IMR-90 (cell line): ENCODE measurements at regions of chr3 and their contacts with region 1.

Region 1: DNA sequence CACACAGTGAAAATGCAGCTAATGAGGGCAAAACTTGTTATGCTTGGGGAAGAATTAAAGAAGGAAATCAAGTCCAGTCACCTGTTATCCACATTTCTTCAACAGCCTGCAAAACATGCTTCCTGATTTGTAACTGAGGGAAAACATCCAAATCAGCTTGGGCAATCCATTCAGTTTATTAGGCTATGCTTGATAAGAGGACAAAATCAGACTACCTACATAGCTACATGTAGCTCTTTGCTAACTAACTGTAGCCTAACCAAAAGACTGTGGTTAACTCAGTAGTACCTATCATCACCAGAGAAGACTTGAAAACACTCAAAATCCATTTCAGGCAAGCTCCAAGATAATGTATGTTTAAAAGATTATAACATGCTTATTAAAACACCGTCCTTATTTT is 436.4 kb downstream of the SHQ1 start:
- DNase-seq: no peak
- ATAC-seq: no peak
- H3K4me3 ChIP-seq: no peak overlapping the region
- H3K27ac ChIP-seq: no peak overlapping the region
- H3K4me1 ChIP-seq: peaks cover 9% of the 10 kb centered on the region
- H3K27me3 ChIP-seq: no peaks in the 10 kb centered on the region
- CTCF ChIP-seq: no peak
- POLR2A ChIP-seq: no peak
- RAD21 ChIP-seq: no peak

Region 2: DNA sequence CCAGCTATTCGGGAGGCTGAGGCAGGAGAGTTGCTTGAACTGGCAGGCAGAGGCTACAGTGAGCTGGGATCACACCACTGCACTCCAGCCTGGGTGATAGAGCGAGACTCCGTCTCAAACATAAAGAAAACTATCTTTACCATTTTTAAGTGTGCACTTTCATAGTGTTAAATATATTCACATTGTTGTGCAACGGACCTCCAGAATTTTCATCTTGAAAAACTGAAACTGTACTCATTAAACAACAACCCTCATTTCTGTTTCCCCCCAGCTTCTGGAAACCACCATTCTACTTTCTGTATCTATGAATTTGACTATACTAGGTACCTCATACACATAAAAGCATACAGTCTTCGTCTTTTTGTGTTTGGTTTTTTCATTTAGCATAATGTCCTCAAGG is 61.3 kb after region 1 on chr3:
- CTCF ChIA-PET with region 1: no interaction called
- POLR2A ChIA-PET with region 1: no interaction called
- dilution Hi-C with region 1: no loop called
- in situ Hi-C with region 1: no loop called
- intact Hi-C with region 1: no loop called
- DNase-seq: no peak
- ATAC-seq: no peak
- H3K4me3 ChIP-seq: no peak overlapping the region
- H3K27ac ChIP-seq: no peak overlapping the region
- H3K4me1 ChIP-seq: no peaks in the 10 kb centered on the region
- H3K27me3 ChIP-seq: peaks cover 15% of the 10 kb centered on the region
- CTCF ChIP-seq: no peak
- POLR2A ChIP-seq: no peak
- RAD21 ChIP-seq: no peak

Region 3: GRCh38 chr3:72746450-72747401 is 334.9 kb after region 1 on chr3:
- CTCF ChIA-PET with region 1: no interaction called
- POLR2A ChIA-PET with region 1: no interaction called
- dilution Hi-C with region 1: no loop called
- in situ Hi-C with region 1: no loop called
- intact Hi-C with region 1: loop called (anchors 1 kb)
- DNase-seq: peak; percentile 60
- ATAC-seq: peak; percentile 53
- H3K4me3 ChIP-seq: no peak overlapping the region
- H3K27ac ChIP-seq: no peak overlapping the region
- H3K4me1 ChIP-seq: no peaks in the 10 kb centered on the region
- H3K27me3 ChIP-seq: no peaks in the 10 kb centered on the region
- CTCF ChIP-seq: no peak
- POLR2A ChIP-seq: no peak
- RAD21 ChIP-seq: no peak